ENCODE measurements at regions of chr5 and their contacts with region 1.

Region 1: DNA sequence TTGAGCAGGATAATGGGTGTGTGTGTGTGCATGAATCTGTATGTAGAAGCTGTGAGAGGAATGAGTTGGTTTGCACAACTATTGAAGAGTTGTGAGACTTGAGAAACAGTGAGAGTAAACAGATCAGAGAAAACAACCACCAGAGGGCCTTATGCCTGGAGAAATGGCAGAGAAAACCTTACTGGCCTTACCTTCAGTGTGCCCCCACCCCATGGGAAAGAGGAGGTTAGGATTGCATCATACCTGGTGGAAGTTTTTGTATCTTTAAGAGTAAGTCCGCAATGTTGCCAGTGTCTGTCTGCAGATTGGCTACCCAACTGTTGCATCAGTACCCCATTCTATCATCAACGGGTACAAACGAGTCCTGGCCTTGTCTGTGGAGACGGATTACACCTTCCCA is 1909.4 kb upstream of the WWC1 start:
- DNase-seq: no peak
- ATAC-seq: no peak
- H3K4me3 ChIP-seq: no peak overlapping the region
- H3K4me3 Mint-ChIP-seq: no peak overlapping the region
- H3K27ac ChIP-seq: no peak overlapping the region
- H3K27ac Mint-ChIP-seq: no peak overlapping the region
- H3K4me1 ChIP-seq: no peaks in the 10 kb centered on the region
- H3K4me1 Mint-ChIP-seq: no peaks in the 10 kb centered on the region
- H3K27me3 ChIP-seq: no peaks in the 10 kb centered on the region
- H3K27me3 Mint-ChIP-seq: no peaks in the 10 kb centered on the region
- CTCF ChIP-seq: no peak

Region 2: GRCh38 chr5:166938071-166938470 is 556.0 kb after region 1 on chr5:
- CTCF ChIA-PET with region 1: no interaction called
- POLR2A ChIA-PET with region 1: no interaction called
- intact Hi-C with region 1: no loop called
- DNase-seq: no peak
- ATAC-seq: no peak
- H3K4me3 ChIP-seq: no peak overlapping the region
- H3K4me3 Mint-ChIP-seq: no peak overlapping the region
- H3K27ac ChIP-seq: no peak overlapping the region
- H3K27ac Mint-ChIP-seq: no peak overlapping the region
- H3K4me1 ChIP-seq: no peaks in the 10 kb centered on the region
- H3K4me1 Mint-ChIP-seq: no peaks in the 10 kb centered on the region
- H3K27me3 ChIP-seq: no peaks in the 10 kb centered on the region
- H3K27me3 Mint-ChIP-seq: no peaks in the 10 kb centered on the region
- CTCF ChIP-seq: no peak

Region 3: DNA sequence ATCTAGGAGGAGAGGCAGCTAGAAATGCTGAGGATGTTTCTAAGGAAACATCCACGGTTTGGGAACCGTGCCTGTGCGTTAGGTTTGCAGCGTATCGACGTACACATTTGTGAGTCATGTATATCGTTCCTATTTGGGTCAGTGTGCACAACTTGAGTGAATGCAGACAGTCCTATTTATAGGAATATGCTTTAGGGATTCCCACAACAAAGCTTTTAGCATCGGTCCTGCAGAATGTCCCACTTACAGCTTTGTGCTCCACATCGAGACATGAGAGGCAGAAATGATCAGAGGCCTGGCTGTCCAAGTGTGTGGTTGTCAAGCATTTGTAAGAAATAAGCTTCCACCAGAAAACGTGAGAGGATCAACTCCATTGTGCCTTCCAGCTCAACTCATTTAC is 626.7 kb after region 1 on chr5:
- CTCF ChIA-PET with region 1: no interaction called
- POLR2A ChIA-PET with region 1: no interaction called
- intact Hi-C with region 1: no loop called
- DNase-seq: no peak
- ATAC-seq: no peak
- H3K4me3 ChIP-seq: no peak overlapping the region
- H3K4me3 Mint-ChIP-seq: no peak overlapping the region
- H3K27ac ChIP-seq: no peak overlapping the region
- H3K27ac Mint-ChIP-seq: no peak overlapping the region
- H3K4me1 ChIP-seq: no peaks in the 10 kb centered on the region
- H3K4me1 Mint-ChIP-seq: no peaks in the 10 kb centered on the region
- H3K27me3 ChIP-seq: no peaks in the 10 kb centered on the region
- H3K27me3 Mint-ChIP-seq: no peaks in the 10 kb centered on the region
- CTCF ChIP-seq: no peak

Region 4: DNA sequence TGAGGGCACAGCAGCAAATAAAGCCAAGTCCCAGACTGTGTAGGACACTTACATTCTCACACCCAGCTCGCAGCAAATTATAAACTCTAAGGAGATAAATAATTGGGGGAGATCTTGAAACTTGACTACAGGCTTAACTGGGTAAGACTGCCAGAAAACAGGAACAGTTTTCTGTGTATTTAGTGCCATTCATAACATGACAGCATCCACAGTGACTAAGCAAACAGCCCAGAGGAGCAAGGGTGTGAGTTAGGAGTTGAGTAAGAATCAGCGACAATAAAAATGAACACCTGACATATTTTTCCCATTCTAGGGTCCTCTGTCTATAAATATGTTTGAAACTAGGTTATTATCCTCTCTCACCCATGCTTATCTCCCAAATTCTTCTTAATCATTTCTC is 1538.6 kb after region 1 on chr5:
- CTCF ChIA-PET with region 1: no interaction called
- POLR2A ChIA-PET with region 1: no interaction called
- intact Hi-C with region 1: loop called in 1 of 2 experiments (anchors 5 kb)
- DNase-seq: no peak
- ATAC-seq: no peak
- H3K4me3 ChIP-seq: no peak overlapping the region
- H3K4me3 Mint-ChIP-seq: no peak overlapping the region
- H3K27ac ChIP-seq: no peak overlapping the region
- H3K27ac Mint-ChIP-seq: no peak overlapping the region
- H3K4me1 ChIP-seq: no peaks in the 10 kb centered on the region
- H3K4me1 Mint-ChIP-seq: no peaks in the 10 kb centered on the region
- H3K27me3 ChIP-seq: no peaks in the 10 kb centered on the region
- H3K27me3 Mint-ChIP-seq: no peaks in the 10 kb centered on the region
- CTCF ChIP-seq: no peak